A549 (cell line): ENCODE measurements at regions of chr9 and their contacts with region 1.

Region 1: GRCh38 chr9:128296337-128297220 is 20.5 kb downstream of the SWI5 start:
- DNase-seq: no peak
- ATAC-seq: no peak
- H3K4me3 ChIP-seq: no peak overlapping the region
- H3K27ac ChIP-seq: peak overlapping the region in 1 of 2 experiments; percentile 85; a peak in 4 of 6 replicates
- H3K4me1 ChIP-seq: peaks cover 17% of the 10 kb centered on the region
- CTCF ChIP-seq: no peak
- EP300 ChIP-seq: no peak
- POLR2A ChIP-seq: no peak
- RAD21 ChIP-seq: no peak

Region 2: GRCh38 chr9:128275996-128276573 is 20.5 kb before region 1 on chr9 and contains the starts of genes GOLGA2 and SWI5:
- CTCF ChIA-PET with region 1: interaction called, 10 read pairs
- POLR2A ChIA-PET with region 1: interaction called, 6 read pairs
- DNase-seq: peak; percentile 97 to 99
- ATAC-seq: peak; percentile 91 to 97
- H3K4me3 ChIP-seq: peak within 1 kb of the TSS; percentile 95
- H3K27ac ChIP-seq: peak within 1 kb of the TSS; percentile 94
- H3K4me1 ChIP-seq: peaks cover 12% of the 10 kb centered on the region; the same call in 2 of the 3 replicates
- CTCF ChIP-seq: no peak
- EP300 ChIP-seq: no peak
- POLR2A ChIP-seq: peak; percentile 96
- RAD21 ChIP-seq: no peak
- polyA plus RNA-seq, gene GOLGA2: 55.3 and 61.9 TPM in 2 replicates
- polyA plus RNA-seq, gene SWI5: 66.8 and 67.6 TPM in 2 replicates

Region 3: DNA sequence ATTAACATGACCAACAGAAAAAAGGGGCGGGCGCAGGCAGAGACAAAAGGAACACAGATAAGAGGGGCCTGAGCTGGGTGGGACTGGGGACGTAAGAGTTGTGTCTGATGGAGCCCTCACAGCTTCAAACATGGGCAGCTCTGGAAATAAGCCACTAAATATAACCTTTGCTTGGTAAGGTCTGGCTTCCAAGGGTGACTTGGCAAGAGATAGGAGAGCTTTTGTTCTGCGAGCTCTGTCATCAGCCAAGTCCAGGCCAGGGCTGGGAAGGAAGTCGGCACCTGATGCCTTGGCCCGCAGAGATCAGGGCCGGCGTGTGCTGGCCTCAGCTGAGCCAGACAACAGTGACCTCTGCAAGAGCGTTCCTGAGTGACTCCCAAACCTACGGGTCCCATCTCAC is 13.9 kb after region 1 on chr9:
- CTCF ChIA-PET with region 1: interaction called, 97 read pairs
- POLR2A ChIA-PET with region 1: no interaction called
- DNase-seq: no peak
- ATAC-seq: no peak
- H3K4me3 ChIP-seq: no peak overlapping the region
- H3K27ac ChIP-seq: peak overlapping the region in 1 of 2 experiments; percentile 20; a peak in 2 of 6 replicates
- H3K4me1 ChIP-seq: peaks cover 30% of the 10 kb centered on the region
- CTCF ChIP-seq: no peak
- EP300 ChIP-seq: no peak
- POLR2A ChIP-seq: no peak
- RAD21 ChIP-seq: no peak

Region 4: DNA sequence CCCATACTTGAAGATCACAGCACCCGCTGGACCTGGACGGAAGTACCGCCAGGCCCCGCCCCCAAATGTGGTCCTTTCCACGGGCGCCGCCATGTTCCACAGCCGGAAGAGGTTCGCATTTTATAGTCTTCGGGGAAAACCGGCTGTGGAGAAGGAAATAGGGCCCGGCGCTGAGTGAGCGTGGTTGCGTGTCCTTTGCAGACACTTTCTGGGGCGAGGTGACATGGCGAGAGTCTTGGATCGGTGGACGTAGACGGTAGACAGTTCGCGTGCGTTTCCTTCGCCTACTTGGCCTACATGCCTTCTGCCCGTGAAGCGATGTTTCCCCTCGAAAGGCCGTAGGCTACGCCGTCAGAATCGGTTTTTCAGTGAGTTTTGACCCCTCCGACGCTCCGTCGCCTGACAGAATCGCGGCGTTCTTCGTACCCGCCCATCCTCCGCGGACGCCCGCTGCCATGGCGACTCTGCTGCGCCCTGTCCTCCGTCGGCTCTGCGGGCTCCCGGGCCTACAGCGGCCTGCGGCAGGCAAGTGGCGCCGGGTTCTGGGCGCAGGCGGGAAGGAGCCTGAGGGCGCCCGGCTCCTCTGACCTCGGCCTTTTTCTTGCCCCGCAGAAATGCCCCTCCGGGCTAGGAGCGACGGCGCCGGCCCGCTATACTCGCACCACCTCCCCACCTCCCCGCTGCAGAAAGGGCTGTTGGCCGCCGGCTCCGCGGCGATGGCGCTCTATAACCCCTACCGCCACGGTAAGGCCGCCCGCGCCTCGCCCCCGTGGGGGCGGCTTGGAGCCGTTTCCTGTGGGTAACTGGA is 26.0 kb after region 1 on chr9 and contains the starts of genes COQ4 and TRUB2:
- CTCF ChIA-PET with region 1: interaction called, 19 read pairs
- POLR2A ChIA-PET with region 1: interaction called, 5 read pairs
- DNase-seq: peak; percentile 96 to 97
- ATAC-seq: peak; percentile 96 to 99
- H3K4me3 ChIP-seq: peak within 1 kb of the TSS; percentile 74
- H3K27ac ChIP-seq: peak within 1 kb of the TSS; percentile 97 to 99
- H3K4me1 ChIP-seq: peaks cover 20% of the 10 kb centered on the region
- CTCF ChIP-seq: no peak
- EP300 ChIP-seq: no peak
- POLR2A ChIP-seq: peak; percentile 61
- RAD21 ChIP-seq: peak in 1 of 2 experiments; percentile 6; a peak in 2 of 5 replicates
- polyA plus RNA-seq, gene COQ4: 32.5 and 38.0 TPM in 2 replicates
- polyA plus RNA-seq, gene TRUB2: 29.0 and 43.4 TPM in 2 replicates

Region 5: GRCh38 chr9:128339771-128340690 is 43.5 kb after region 1 on chr9 and contains the start of gene SLC27A4:
- CTCF ChIA-PET with region 1: interaction called, 206 read pairs
- POLR2A ChIA-PET with region 1: interaction called, 13 read pairs
- DNase-seq: peak; percentile 81 to 93
- ATAC-seq: peak; percentile 86 to 89
- H3K4me3 ChIP-seq: peak within 1 kb of the TSS; percentile 90
- H3K27ac ChIP-seq: peak within 1 kb of the TSS; percentile 89 to 92
- H3K4me1 ChIP-seq: 0 out of 3 replicates have a peak, but pooled peaks cover 4% of the 10 kb centered on the region
- CTCF ChIP-seq: no peak
- EP300 ChIP-seq: no peak
- POLR2A ChIP-seq: peak; percentile 57
- RAD21 ChIP-seq: no peak
- polyA plus RNA-seq, gene SLC27A4: 14.5 and 14.9 TPM in 2 replicates

Region 6: GRCh38 chr9:128370826-128371621 is 74.4 kb after region 1 on chr9 and contains the start of gene URM1:
- CTCF ChIA-PET with region 1: interaction called, 182 read pairs
- POLR2A ChIA-PET with region 1: interaction called, 5 read pairs
- DNase-seq: peak; percentile 94 to 97
- ATAC-seq: peak; percentile 96 to 98
- H3K4me3 ChIP-seq: peak within 1 kb of the TSS; percentile 83
- H3K27ac ChIP-seq: peak within 1 kb of the TSS; percentile 89 to 90
- H3K4me1 ChIP-seq: peaks cover 19% of the 10 kb centered on the region; the same call in 2 of the 3 replicates
- CTCF ChIP-seq: no peak; the same call in 1 of the 3 replicates
- EP300 ChIP-seq: no peak
- POLR2A ChIP-seq: peak; percentile 83
- RAD21 ChIP-seq: no peak
- polyA plus RNA-seq, gene URM1: 43.6 and 61.6 TPM in 2 replicates

Region 7: DNA sequence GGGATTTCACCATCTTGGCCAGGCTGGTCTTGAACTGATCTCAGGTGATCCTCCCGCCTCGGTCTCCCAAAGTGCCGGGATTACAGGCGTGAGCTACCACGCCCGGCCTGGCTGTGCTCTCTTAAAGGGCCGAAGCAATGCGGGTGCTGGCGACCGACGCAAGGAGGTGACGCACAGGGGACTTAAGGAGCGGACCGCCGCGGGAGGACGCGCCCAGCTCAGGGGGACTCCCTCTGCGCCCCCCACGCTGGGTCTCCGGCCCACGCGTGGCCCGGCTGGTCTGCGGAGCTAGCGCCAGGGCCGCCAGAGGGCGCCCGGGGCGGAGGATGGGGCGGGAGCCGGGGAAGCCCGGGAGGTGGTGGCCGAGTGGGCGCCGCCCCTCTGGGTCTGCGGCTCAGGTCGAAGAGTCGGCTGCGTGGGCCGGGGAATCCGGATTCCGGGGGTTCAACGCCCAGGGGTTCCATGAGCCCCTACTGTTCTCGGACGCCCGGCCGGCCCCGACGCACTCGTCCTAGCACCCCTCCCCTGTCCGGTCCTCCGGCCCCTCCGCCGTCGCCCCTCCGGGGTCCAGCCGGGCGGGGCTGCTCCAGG is 123.6 kb after region 1 on chr9:
- CTCF ChIA-PET with region 1: interaction called, 20 read pairs
- POLR2A ChIA-PET with region 1: interaction called, 3 read pairs
- DNase-seq: peak; percentile 60 to 71
- ATAC-seq: peak; percentile 88
- H3K4me3 ChIP-seq: peak overlapping the region; percentile 80
- H3K27ac ChIP-seq: peak overlapping the region; percentile 84 to 95
- H3K4me1 ChIP-seq: peaks cover 17% of the 10 kb centered on the region; the same call in 2 of the 3 replicates
- CTCF ChIP-seq: peak; percentile 91
- EP300 ChIP-seq: no peak
- POLR2A ChIP-seq: peak; percentile 28
- RAD21 ChIP-seq: peak; percentile 24 to 45; a peak in 3 of 5 replicates